HEK293T (cell line): ENCODE measurements at regions of chr1 and their contacts with region 1.

Region 1: GRCh38 chr1:157984469-157984868 is 9.0 kb upstream of the KIRREL1 start:
- DNase-seq: no peak

Region 2: GRCh38 chr1:157969697-157970485 is 14.6 kb before region 1 on chr1:
- CTCF ChIA-PET with region 1: interaction called, 16 read pairs
- POLR2A ChIA-PET with region 1: no interaction called
- DNase-seq: peak; percentile 73